ENCODE measurements at regions of chr3 and their contacts with region 1.

Region 1: GRCh38 chr3:48472915-48473616 is 26.5 kb downstream of the ATRIP start:
- DNase-seq: peak; percentile 95
- H3K4me3 Mint-ChIP-seq: peak overlapping the region; percentile 76
- H3K27ac Mint-ChIP-seq: peak overlapping the region; percentile 93
- H3K4me1 Mint-ChIP-seq: peaks cover 47% of the 10 kb centered on the region
- H3K27me3 Mint-ChIP-seq: no peaks in the 10 kb centered on the region

Region 2: DNA sequence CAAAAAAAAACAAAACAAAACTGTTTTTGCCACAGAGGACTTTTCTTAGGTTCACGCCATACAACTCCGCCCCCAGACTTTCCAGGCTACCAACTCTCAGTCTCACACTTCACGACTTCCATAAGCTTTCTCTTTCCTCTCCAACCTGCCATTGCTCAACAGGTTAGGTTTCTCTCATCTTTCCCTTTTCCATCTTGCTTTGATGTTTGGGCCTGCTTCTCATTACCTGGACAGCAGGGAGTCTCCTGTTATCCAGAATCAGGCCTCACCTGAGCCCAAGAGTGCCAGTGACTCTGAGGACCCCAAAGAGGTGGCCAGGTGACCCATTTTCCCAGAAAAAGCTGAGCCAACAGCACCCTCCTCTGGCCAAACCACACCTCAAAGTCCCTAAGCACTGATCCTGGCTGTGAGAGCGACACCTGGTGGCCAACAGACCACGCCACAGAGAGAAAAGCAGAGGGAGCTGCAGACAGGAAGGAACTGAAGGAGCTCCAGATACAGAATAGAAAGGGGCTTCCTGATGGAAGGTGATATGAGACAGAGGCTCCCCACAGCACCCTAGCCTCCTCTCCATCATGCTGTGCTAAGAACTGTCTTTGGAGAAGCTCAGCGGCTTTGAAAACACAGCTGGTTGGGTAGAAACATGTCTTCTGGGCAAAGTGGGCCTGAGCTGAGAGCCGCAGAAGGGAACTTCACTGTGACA is 37.1 kb before region 1 on chr3:
- intact Hi-C with region 1: no loop called
- DNase-seq: peak; percentile 81
- H3K4me3 Mint-ChIP-seq: no peak overlapping the region
- H3K27ac Mint-ChIP-seq: no peak overlapping the region
- H3K4me1 Mint-ChIP-seq: peaks cover 18% of the 10 kb centered on the region
- H3K27me3 Mint-ChIP-seq: no peaks in the 10 kb centered on the region

Region 3: DNA sequence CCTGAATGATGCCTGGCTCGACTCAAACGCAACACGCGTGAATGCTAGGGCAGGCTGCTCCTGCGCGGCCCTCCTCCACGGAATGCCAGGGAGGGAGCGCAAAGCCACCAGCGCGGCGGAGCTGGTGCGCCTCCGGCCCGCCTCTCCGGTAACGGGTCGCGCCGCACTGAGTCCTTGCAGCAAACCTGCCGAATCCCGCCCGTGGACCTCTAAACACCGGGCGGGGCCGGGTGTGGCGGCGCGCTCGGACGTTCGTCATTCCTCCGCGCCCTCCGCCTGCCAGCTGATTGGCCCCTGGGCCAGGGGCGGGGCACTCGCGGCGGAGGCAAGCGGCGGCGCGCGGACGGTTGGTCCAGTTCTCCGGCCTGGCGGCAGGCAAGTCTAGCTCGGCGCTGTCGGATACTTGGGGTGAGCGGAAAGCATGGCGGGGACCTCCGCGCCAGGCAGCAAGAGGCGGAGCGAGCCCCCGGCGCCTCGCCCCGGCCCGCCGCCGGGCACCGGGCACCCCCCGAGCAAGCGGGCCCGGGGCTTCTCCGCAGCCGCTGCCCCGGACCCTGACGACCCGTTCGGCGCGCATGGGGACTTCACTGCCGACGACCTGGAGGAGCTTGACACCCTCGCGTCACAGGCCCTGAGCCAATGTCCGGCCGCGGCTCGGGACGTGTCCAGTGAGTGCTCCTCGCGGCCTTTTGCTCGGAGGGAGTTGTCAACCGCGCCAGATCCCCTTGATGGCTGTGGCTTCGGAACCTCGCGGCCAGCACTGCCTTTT is 26.5 kb before region 1 on chr3 and contains the start of gene ATRIP:
- intact Hi-C with region 1: loop called (anchors 2 kb)
- DNase-seq: peak; percentile 87
- H3K4me3 Mint-ChIP-seq: peak within 1 kb of the TSS; percentile 94
- H3K27ac Mint-ChIP-seq: peak within 1 kb of the TSS; percentile 81
- H3K4me1 Mint-ChIP-seq: peaks cover 30% of the 10 kb centered on the region
- H3K27me3 Mint-ChIP-seq: no peaks in the 10 kb centered on the region
- total RNA-seq, gene ATRIP: 16.9 and 17.5 TPM in 2 replicates

Region 4: GRCh38 chr3:48459773-48460516 is 13.1 kb before region 1 on chr3:
- intact Hi-C with region 1: no loop called
- DNase-seq: no peak
- H3K4me3 Mint-ChIP-seq: no peak overlapping the region
- H3K27ac Mint-ChIP-seq: no peak overlapping the region
- H3K4me1 Mint-ChIP-seq: no peaks in the 10 kb centered on the region
- H3K27me3 Mint-ChIP-seq: no peaks in the 10 kb centered on the region

Region 5: GRCh38 chr3:48507351-48508061 is 34.4 kb after region 1 on chr3:
- intact Hi-C with region 1: loop called (anchors 2 kb)
- DNase-seq: peak; percentile 63
- H3K4me3 Mint-ChIP-seq: no peak overlapping the region
- H3K27ac Mint-ChIP-seq: peak overlapping the region; percentile 1
- H3K4me1 Mint-ChIP-seq: peaks cover 39% of the 10 kb centered on the region
- H3K27me3 Mint-ChIP-seq: no peaks in the 10 kb centered on the region

Region 6: GRCh38 chr3:48595526-48596121 is 122.6 kb after region 1 on chr3:
- intact Hi-C with region 1: no loop called
- DNase-seq: no peak
- H3K4me3 Mint-ChIP-seq: no peak overlapping the region
- H3K27ac Mint-ChIP-seq: no peak overlapping the region
- H3K4me1 Mint-ChIP-seq: no peaks in the 10 kb centered on the region
- H3K27me3 Mint-ChIP-seq: peaks cover 12% of the 10 kb centered on the region

Region 7: GRCh38 chr3:48635222-48636021 is 162.4 kb after region 1 on chr3 and contains the start of gene SLC26A6:
- intact Hi-C with region 1: loop called (anchors 10 kb)
- DNase-seq: peak; percentile 94
- H3K4me3 Mint-ChIP-seq: peak within 1 kb of the TSS; percentile 92
- H3K27ac Mint-ChIP-seq: peak within 1 kb of the TSS; percentile 87
- H3K4me1 Mint-ChIP-seq: peaks cover 21% of the 10 kb centered on the region
- H3K27me3 Mint-ChIP-seq: no peaks in the 10 kb centered on the region
- total RNA-seq, gene SLC26A6: 85.1 and 89.6 TPM in 2 replicates

Region 8: GRCh38 chr3:48663415-48664312 is 190.6 kb after region 1 on chr3:
- intact Hi-C with region 1: loop called (anchors 2 kb)
- DNase-seq: peak; percentile 94
- H3K4me3 Mint-ChIP-seq: peak overlapping the region; percentile 90
- H3K27ac Mint-ChIP-seq: peak overlapping the region; percentile 99
- H3K4me1 Mint-ChIP-seq: peaks cover 10% of the 10 kb centered on the region
- H3K27me3 Mint-ChIP-seq: peaks cover 8% of the 10 kb centered on the region

Measured in activated T-helper 2 cell treated with anti-CD3 and anti-CD28 coated beads, Interferon-gamma antibody, Interleukin-2, Interleukin-4, amounts not matched to agents 10 μg/mL and 5 μg/mL and 100 μg/mL, durations not matched to agents 14 hours and 24 hours and 36 hours (primary cell).